T-cell (primary cell): ENCODE measurements at regions of chr5 and their contacts with region 1.

Region 1: GRCh38 chr5:38420691-38421390 is 135.6 kb downstream of the LIFR start:
- DNase-seq: peak in 10 of 35 experiments; percentile 1 to 38 (median 10)
- ATAC-seq: no peak
- H3K4me3 ChIP-seq: no peak overlapping the region
- H3K4me3 Mint-ChIP-seq: no peak overlapping the region
- H3K27ac ChIP-seq: no peak overlapping the region
- H3K27ac Mint-ChIP-seq: no peak overlapping the region
- H3K4me1 ChIP-seq: no peaks in the 10 kb centered on the region
- H3K4me1 Mint-ChIP-seq: no peaks in the 10 kb centered on the region
- H3K27me3 ChIP-seq: peaks cover 0 to 9% of the 10 kb centered on the region in 2 experiments
- H3K27me3 Mint-ChIP-seq: peaks cover 36 to 51% of the 10 kb centered on the region in 2 donors

Region 2: GRCh38 chr5:38410304-38410990 is 10.4 kb before region 1 on chr5:
- CTCF ChIA-PET with region 1: interaction called in 1 of 2 experiments, 11 read pairs
- POLR2A ChIA-PET with region 1: no interaction called
- DNase-seq: no peak
- ATAC-seq: no peak
- H3K4me3 ChIP-seq: no peak overlapping the region
- H3K4me3 Mint-ChIP-seq: no peak overlapping the region
- H3K27ac ChIP-seq: no peak overlapping the region
- H3K27ac Mint-ChIP-seq: no peak overlapping the region
- H3K4me1 ChIP-seq: no peaks in the 10 kb centered on the region
- H3K4me1 Mint-ChIP-seq: no peaks in the 10 kb centered on the region
- H3K27me3 ChIP-seq: peaks cover 0 to 30% of the 10 kb centered on the region in 2 experiments
- H3K27me3 Mint-ChIP-seq: peaks cover 26 to 27% of the 10 kb centered on the region in 2 donors

Region 3: GRCh38 chr5:38447786-38448185 is 26.9 kb after region 1 on chr5:
- CTCF ChIA-PET with region 1: interaction called in 1 of 2 experiments, 11 read pairs
- POLR2A ChIA-PET with region 1: no interaction called
- DNase-seq: no peak
- ATAC-seq: no peak
- H3K4me3 ChIP-seq: no peak overlapping the region
- H3K4me3 Mint-ChIP-seq: no peak overlapping the region
- H3K27ac ChIP-seq: no peak overlapping the region
- H3K27ac Mint-ChIP-seq: no peak overlapping the region
- H3K4me1 ChIP-seq: peaks cover under 1 to 10% of the 10 kb centered on the region in 2 experiments
- H3K4me1 Mint-ChIP-seq: peaks cover 10 to 13% (median 10%) of the 10 kb centered on the region in 3 donors
- H3K27me3 ChIP-seq: peaks cover 5 to 57% of the 10 kb centered on the region in 2 experiments
- H3K27me3 Mint-ChIP-seq: peaks cover 57 to 66% of the 10 kb centered on the region in 2 donors

Region 4: DNA sequence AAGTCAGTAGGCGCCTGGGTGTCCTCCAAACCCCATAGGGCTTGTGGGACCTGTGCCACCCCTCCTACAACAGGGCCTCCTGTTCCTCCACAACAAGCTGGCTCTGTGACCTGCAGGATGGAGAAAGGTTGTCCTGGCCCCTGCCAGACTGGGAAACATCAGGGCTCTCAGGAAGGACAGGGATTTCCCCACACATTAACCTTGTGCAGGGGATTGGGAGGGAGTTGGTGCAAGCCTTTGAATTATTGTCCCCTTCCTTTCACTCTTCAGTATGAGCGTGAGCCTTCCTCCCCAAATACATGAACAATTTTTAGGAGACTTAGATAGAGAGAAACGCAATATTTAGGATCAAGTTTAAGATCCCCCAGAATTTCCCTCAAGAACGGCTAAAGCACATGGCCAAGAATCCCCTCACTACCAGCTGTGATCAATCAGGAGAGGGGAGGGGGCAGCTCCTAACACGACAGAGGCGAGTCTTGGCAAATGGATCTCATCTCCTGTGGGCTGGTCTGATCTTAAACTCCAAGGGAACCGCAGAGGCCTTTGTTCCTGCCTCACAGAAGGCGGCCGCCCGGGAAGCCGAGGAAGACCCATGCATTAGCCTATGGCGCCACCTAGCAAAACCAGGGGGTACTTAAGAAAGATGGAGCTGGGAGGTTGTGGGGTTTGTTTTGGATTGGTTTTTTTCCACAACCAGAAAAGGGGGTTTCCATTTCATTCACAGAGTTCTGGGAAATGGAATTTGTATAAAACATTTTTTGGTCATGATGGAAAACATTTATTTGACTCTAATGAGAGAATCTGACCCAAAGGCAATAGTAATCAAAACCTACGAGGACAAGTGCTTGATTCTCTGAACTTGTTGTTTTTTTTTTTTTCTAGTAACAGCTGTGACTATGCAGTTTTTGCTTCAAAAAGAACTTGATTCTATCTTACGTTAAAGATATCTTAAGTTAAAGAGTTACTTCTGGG is 388.8 kb after region 1 on chr5:
- CTCF ChIA-PET with region 1: interaction called, 3 to 29 read pairs
- POLR2A ChIA-PET with region 1: interaction called in 1 of 2 experiments, 3 read pairs
- DNase-seq: peak in 26 of 35 experiments; percentile 2 to 57 (median 19)
- ATAC-seq: peak in 1 of 4 experiments; percentile 19
- H3K4me3 ChIP-seq: no peak overlapping the region
- H3K4me3 Mint-ChIP-seq: no peak overlapping the region
- H3K27ac ChIP-seq: no peak overlapping the region
- H3K27ac Mint-ChIP-seq: no peak overlapping the region
- H3K4me1 ChIP-seq: no peaks in the 10 kb centered on the region
- H3K4me1 Mint-ChIP-seq: peaks cover 0 to 3% (median 2%) of the 10 kb centered on the region in 3 donors
- H3K27me3 ChIP-seq: peaks cover 4 to 17% of the 10 kb centered on the region in 2 experiments
- H3K27me3 Mint-ChIP-seq: peaks cover 39 to 44% of the 10 kb centered on the region in 2 donors